ENCODE measurements at regions of chr12 and their contacts with region 1.

Region 1: GRCh38 chr12:54259194-54260011 is 20.5 kb downstream of the CBX5 start:
- DNase-seq: peak; percentile 87

Region 2: DNA sequence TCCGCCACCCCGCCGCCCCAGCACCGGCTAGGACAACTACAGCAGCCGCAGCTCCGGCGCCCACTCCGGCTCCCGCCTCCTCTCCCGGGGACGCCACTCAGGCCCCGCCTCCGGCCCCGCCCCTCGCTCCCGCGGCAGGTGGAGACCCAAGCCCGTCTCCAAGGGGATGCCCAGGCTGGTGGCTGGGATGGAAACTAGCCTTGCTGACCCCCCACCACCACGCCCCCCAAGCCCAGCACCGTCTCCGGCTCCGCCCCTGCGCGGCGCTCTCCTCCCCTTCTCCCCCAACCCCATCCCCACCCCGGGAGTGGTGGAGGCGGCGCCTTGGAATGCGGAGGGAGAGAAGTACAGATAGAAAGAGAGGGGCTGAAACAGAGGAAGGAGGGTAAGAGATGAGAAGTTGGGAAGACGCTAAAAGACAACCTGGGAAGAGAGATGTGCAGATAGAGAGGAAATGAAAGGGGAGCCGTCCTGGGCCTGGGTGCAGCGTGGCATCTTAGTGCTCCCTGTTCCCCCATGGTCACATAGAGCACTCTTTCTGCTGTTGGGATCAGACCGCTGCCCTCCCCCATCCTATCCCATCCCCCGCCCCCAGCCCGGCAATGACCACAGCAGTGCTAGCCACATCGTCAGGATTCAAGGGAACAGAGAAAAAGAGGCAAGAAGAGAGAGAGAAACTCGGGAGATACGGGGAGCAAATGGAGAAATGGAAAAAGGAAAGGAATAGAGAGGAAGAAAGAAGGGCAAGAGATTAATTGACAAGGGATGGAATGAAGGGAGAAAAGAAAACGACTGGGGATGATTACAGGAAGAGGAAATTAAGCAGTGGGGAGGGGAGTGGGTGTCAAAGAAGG is 1448.7 kb after region 1 on chr12 and contains the start of gene ITGA7:
- intact Hi-C with region 1: loop called in 1 of 2 experiments (anchors 5 kb)
- DNase-seq: peak; percentile 92
- total RNA-seq, gene ITGA7: 497 to 570 TPM